Breast epithelium (tissue), 4 donors: ENCODE measurements at regions of chr10 and their contacts with region 1.

Region 1: DNA sequence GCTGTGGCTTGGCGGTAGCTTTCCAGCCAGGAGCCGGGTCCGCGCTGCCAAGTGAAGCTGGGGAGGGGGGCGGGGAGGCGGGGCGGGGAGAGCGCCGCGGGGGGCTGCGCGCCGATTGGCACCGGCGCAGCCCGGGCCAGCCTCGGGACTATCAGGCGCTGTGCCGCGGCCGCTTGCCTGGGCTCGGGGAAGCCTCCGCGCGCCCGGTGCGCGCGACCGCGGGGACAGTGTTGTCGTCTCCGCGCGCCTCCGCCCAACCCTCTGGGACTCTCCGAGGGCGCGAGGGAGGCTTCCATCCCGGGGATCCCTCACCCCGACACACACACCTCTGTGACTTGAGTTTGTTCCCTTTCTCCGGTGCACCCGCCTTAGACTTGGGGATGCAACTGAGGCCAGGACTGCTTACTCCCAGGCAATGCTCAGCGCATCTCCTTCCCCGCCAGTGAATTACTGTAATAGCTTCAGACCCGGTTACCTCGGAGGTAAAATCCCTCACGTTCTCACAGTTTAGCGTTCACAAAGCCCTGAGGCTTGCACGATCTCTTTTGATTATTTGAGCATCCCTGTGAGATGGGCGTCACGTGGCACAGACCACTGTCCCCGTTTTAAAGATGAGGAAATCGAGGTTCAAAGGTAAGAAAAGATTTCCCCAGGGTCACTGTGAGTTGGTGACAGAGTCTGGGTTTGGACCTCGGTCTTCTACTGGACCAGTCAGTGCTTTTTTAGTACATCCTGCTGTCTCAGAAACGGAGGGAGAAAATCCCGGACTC is at the start of gene NKX1-2:
- DNase-seq: no peak
- H3K4me3 ChIP-seq: peak within 1 kb of the TSS in 2 of 3 donors; percentile 51 to 61
- H3K27ac ChIP-seq: no peak within 1 kb of the TSS
- H3K4me1 ChIP-seq: peaks cover 3% of the 10 kb centered on the region in 2 donors
- H3K27me3 ChIP-seq: peaks cover 5 to 53% of the 10 kb centered on the region in 2 donors
- CTCF ChIP-seq: no peak
- POLR2A ChIP-seq: no peak
- total RNA-seq, gene NKX1-2: 0.33 to 0.73 TPM in 2 of 3 donors, not detected in the other

Region 2: GRCh38 chr10:123398180-123398591 is 1052.0 kb before region 1 on chr10:
- intact Hi-C with region 1: loop called (anchors 10 kb)
- DNase-seq: no peak
- H3K4me3 ChIP-seq: no peak overlapping the region
- H3K27ac ChIP-seq: no peak overlapping the region
- H3K4me1 ChIP-seq: no peaks in the 10 kb centered on the region
- H3K27me3 ChIP-seq: no peaks in the 10 kb centered on the region
- CTCF ChIP-seq: no peak
- POLR2A ChIP-seq: no peak

Region 3: DNA sequence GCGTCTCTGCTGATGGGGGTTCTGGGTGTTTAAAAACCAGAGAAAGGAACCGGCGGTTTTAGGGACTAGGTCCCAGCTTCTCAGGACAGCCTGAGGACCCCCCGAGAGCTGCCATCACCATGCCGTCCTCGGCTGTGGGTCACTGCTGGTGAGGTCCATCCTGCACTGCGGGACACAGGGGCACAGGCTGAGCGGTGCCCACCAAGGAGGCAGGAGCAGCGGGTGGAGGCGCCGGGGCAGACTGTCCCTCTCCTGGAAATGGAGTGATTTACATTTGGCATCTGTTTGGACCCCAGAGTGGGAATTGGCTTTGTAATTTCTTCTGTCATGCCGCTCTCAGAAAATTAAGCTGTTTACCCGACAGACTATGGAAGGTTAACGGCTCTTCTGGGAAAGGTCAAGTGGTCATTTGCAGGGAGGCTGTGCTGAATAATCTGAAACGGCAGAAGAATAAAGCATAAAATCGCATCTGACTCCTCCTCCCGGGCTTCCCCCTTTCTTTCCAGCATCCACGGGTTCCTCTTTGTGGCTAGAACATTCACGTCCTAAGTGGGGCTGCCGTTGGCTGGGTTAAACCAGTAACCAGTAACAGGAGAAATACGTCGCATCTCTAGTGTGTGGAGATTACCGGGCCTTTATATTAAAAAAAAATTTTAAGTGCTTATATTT is 43.2 kb after region 1 on chr10:
- intact Hi-C with region 1: no loop called
- DNase-seq: no peak
- H3K4me3 ChIP-seq: no peak overlapping the region
- H3K27ac ChIP-seq: no peak overlapping the region
- H3K4me1 ChIP-seq: no peaks in the 10 kb centered on the region
- H3K27me3 ChIP-seq: no peaks in the 10 kb centered on the region
- CTCF ChIP-seq: no peak
- POLR2A ChIP-seq: no peak